Body of pancreas (tissue), 4 donors: ENCODE measurements at regions of chr1 and their contacts with region 1.

Region 1: GRCh38 chr1:27392096-27392777 is at the start of gene GPR3:
- DNase-seq: peak; percentile 85 to 92 (median 89)
- ATAC-seq: peak; percentile 86
- H3K4me3 ChIP-seq: peak within 1 kb of the TSS in 1 of 2 donors; percentile 23
- H3K27ac ChIP-seq: peak within 1 kb of the TSS in 3 of 4 donors; percentile 20 to 53 (median 49)
- H3K4me1 ChIP-seq: peaks cover 22% of the 10 kb centered on the region
- H3K27me3 ChIP-seq: no peaks in the 10 kb centered on the region
- CTCF ChIP-seq: peak in 6 of 7 experiments; percentile 35 to 57 (median 46)
- POLR2A ChIP-seq: no peak
- total RNA-seq, gene GPR3: not detected

Region 2: DNA sequence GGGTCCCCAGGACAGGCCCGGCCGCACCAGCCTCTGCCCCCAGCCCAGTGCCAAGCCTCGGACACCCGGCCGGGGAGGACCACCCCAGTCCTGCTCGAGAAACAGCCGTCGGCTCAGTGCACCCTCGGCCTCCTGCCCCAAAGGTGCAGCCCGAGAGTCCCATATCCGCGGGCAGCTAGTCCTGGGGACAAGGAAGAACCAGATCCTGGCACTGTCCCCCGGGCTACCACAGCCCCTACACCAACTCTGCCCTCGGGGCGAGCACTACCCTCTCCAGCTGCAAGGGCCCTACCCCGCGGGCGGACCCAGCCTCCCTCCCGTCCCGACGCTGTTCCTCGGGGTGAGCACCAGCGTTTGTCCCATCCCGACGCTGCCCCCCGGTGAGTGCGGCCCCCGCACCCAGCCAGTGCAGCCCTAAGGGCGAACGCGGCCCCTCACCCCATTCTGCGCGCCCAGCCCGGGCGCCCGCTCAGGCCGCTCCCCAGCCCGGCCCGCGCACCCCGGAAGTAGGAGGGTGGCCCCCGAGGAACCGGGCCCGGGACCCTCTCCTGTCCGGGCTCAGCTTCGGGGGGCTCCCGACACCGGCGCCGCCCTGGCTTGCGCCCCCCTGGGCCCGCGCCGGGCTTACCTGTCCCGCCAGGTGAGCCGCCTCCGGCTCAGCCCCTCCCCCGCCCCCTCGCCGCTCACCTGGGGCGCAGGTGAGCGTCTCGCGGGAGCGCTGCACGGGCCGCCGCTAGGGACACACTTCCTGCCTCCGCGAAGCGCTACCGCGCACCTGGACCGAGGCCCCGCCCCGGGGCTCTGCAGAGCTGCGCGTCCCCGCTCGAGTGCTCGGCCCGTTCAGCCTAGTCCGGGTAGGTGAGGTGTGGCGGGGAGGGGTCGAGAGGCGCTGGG is 432.3 kb before region 1 on chr1 and contains the start of gene KDF1:
- intact Hi-C with region 1: no loop called
- DNase-seq: peak; percentile 88 to 94 (median 92)
- ATAC-seq: peak; percentile 99
- H3K4me3 ChIP-seq: peak within 1 kb of the TSS; percentile 95 to 97
- H3K27ac ChIP-seq: peak within 1 kb of the TSS; percentile 82 to 90 (median 88)
- H3K4me1 ChIP-seq: peaks cover 27% of the 10 kb centered on the region
- H3K27me3 ChIP-seq: no peaks in the 10 kb centered on the region
- CTCF ChIP-seq: peak in 3 of 7 experiments; percentile 18 to 53 (median 46)
- POLR2A ChIP-seq: peak; percentile 75 to 84 (median 76)
- total RNA-seq, gene KDF1: 13.8 to 18.7 TPM

Region 3: DNA sequence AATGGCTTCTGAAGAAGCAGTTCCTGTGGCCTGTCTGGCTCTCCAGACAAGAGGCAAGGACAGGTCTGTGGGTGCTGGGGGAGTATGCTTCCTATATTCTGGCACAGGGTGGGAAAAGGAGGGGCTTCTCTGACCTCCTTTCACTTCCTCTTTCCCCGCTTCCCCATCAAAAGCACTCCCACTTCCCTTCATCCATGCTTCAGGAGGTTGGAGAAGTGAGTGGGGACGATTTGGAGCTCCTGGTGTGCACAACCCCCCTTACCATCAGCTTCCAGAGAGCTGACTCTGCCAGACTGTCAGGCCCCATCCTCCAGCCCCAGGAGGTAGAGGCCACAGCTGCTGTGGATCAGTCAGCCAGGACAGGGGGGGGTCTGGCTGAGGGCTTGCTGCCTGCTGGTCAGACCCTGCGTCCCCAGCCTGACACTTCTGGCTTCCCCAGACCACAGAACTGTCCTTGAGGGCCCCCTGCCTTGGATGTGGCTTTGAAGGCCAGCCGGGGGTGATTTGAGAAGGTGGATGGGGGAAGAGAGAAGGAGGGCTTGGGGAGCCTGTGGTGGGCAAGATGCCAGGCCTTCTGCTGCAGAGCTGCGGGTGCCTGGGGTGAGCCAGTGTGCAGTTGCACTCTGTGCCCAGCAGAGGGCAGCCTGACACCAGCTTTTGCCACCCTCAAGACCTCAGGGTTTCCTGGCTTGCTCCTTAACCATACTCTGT is 91.7 kb before region 1 on chr1:
- intact Hi-C with region 1: loop called (anchors 2 kb)
- DNase-seq: peak; percentile 81 to 87 (median 84)
- ATAC-seq: peak; percentile 84
- H3K4me3 ChIP-seq: no peak overlapping the region
- H3K27ac ChIP-seq: peak overlapping the region in 2 of 4 donors; percentile 27 to 51
- H3K4me1 ChIP-seq: no peaks in the 10 kb centered on the region
- H3K27me3 ChIP-seq: no peaks in the 10 kb centered on the region
- CTCF ChIP-seq: peak; percentile 95 to 98 (median 97)
- POLR2A ChIP-seq: peak in 1 of 3 donors; percentile 4

Region 4: DNA sequence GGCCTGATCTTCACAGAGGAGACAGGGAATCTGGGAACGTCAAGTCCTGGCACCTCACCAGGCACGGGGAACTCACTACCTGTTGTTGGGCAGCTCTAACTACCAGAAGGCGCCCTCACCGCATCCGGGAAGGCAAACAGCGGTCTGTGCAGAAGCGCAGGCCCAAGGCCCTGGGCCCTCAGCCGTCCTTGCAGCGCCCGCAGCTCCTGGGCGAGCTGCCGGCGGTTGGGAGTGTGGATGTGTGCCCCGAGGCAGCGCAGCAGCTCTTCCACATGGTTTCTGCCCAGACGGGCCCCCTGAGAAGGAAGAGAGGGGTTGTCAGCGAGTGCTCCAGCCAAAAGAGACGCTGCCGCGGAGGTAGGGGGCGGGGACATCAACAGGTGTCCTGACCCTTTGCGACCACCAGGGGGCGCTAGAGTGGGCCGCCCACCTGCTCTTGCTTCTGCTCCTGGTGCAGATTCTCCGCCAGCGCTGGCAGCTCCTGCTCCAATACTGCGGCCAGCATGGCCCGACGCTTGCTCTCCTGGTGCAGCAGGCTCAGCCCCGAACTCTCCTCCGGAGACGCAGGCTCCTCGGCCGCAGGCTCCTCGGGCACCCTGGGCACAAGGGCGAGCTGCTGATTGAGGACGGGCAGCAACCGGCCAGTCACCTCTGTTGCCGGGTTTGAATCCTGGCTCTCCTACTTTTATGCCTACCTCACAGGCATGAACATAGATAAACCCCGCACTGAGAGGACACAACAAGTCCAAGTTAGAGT is 34.8 kb before region 1 on chr1:
- intact Hi-C with region 1: loop called (anchors 5 kb)
- DNase-seq: peak; percentile 83 to 86 (median 83)
- ATAC-seq: peak; percentile 86
- H3K4me3 ChIP-seq: no peak overlapping the region
- H3K27ac ChIP-seq: peak overlapping the region in 1 of 4 donors; percentile 17
- H3K4me1 ChIP-seq: peaks cover 22% of the 10 kb centered on the region
- H3K27me3 ChIP-seq: no peaks in the 10 kb centered on the region
- CTCF ChIP-seq: peak; percentile 95 to 99 (median 96)
- POLR2A ChIP-seq: no peak

Region 5: DNA sequence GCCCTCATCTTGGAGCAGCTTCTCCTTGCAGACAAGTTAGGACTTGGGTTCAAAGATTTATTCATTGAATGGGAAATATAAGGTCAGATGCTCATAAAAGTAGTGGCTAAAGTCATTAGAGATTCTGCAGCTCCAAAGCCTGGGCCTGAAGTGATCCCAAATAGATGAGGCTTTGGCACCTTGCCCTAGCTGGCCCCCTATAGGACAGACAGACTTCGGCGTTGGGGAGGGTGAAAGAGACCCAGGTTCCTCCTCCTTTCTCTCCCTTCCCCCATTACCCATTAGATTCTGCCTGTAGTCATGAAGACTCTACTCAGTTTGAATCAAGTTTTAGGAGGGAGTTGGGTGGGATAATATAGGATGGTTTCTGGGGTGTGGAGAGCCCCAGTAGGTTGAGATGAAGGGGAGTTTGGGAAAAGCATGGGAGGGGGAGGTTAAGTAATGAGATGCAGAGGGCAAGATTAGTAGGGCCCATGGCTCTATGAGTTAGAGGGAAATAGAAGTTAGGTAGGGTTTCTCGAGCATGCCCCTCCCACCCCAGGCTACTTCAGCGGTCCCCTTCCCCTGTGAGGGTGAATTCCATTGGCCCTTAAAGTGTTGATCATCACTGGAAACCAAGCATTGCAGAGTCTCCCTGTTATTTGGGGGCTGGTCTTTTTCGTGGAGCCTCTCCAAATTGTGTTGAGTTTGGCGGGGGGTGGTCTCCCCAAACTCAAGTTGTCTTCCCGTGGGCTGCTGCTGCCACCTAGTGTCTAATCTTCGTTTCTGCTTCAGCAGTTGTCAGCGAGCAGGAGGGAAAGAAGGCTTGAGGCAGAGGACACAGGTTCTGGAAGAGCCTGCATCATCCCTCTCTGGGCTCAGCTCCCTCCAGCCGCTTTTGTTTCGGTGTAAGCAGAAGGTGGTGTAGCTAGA is 213.8 kb after region 1 on chr1:
- intact Hi-C with region 1: loop called (anchors 5 kb)
- DNase-seq: peak; percentile 54 to 57 (median 56)
- ATAC-seq: no peak
- H3K4me3 ChIP-seq: no peak overlapping the region
- H3K27ac ChIP-seq: no peak overlapping the region
- H3K4me1 ChIP-seq: peaks cover 21% of the 10 kb centered on the region
- H3K27me3 ChIP-seq: no peaks in the 10 kb centered on the region
- CTCF ChIP-seq: peak; percentile 75 to 93 (median 91)
- POLR2A ChIP-seq: no peak